Common myeloid progenitor, CD34-positive (primary cell): ENCODE measurements at regions of chr1 and their contacts with region 1.

Region 1: GRCh38 chr1:175129997-175130648 is 62.5 kb downstream of the KIAA0040 start:
- DNase-seq: no peak
- H3K4me3 ChIP-seq: no peak overlapping the region
- H3K27ac ChIP-seq: no peak overlapping the region
- H3K4me1 ChIP-seq: peaks cover 0 to 17% (median under 1%) of the 10 kb centered on the region in 4 experiments
- H3K27me3 ChIP-seq: peaks cover 0 to 2% (median 0%) of the 10 kb centered on the region in 5 experiments

Region 2: DNA sequence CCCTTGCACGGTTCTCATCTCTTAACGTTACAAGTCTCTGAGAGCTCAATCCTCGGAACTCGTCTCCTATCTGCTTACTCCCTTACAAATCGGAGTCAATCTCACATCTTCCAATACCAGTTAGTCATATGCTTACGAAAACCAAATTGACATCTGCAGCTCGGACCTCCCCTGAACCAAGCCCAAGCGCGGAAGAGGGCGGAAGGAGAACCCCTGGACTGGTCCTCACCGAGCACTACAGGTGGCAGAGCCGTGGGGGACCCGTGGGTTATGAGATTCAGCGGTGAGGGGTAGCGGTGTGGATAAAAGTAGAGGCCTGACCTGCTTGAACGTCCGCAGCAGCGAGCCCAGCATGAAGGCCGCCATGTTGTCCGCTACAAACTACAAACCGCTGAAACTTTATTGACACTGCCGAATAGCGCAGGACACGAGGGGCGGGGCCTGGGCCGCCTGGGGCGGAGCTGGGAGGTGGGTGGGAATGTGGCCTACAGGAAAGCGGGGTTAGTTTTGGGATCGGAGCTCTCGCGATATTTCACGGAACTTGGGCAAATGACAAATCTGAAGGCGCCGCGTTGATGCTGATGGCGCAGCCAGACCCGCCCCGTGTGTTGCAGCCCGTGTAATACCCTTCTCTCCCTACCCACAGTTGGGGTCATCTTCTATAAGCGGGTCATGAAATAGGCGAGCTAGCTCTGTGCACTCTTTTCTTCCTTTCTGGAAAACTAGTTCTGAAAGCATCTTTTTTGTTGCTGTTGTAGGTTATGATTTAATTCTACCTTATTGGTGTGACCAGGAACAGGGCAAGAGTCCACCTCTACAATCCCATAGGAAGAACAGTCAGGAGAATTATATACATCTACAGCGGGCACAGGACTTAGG is 106.8 kb before region 1 on chr1 and contains the start of gene MRPS14:
- CTCF ChIA-PET with region 1: interaction called, 67 read pairs
- POLR2A ChIA-PET with region 1: interaction called, 3 read pairs
- DNase-seq: peak; percentile 99 to 100 (median 100)
- H3K4me3 ChIP-seq: peak within 1 kb of the TSS; percentile 95 to 100 (median 100)
- H3K27ac ChIP-seq: peak within 1 kb of the TSS; percentile 94 to 97
- H3K4me1 ChIP-seq: peaks cover 5 to 13% (median 10%) of the 10 kb centered on the region in 4 experiments
- H3K27me3 ChIP-seq: no peaks in the 10 kb centered on the region

Region 3: DNA sequence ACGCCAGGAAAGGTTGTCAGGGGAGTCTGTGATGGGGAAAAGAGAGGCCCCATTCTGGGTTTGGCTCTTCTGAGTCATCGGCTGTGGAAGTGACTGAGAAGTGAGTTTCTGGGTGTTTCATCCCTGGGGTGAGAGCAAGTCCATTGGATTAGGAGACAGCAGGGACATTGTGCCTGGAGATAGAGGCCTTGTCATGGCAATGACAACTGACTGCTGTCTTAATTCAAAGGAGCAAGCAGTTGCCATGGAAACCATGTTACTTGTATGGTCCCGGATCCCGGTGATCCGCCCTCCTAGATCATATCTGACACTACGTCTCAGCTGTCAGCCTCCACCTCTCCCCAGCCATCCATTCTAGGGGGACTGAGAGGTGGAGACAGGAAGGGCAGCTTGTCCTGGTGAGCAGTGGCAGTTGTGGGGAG is 28.1 kb after region 1 on chr1:
- CTCF ChIA-PET with region 1: no interaction called
- POLR2A ChIA-PET with region 1: no interaction called
- DNase-seq: no peak
- H3K4me3 ChIP-seq: no peak overlapping the region
- H3K27ac ChIP-seq: no peak overlapping the region
- H3K4me1 ChIP-seq: peaks cover 2 to 5% (median 5%) of the 10 kb centered on the region in 4 experiments
- H3K27me3 ChIP-seq: peaks cover 0 to 12% (median 7%) of the 10 kb centered on the region in 5 experiments